ENCODE measurements at regions of chr9 and their contacts with region 1.

Region 1: DNA sequence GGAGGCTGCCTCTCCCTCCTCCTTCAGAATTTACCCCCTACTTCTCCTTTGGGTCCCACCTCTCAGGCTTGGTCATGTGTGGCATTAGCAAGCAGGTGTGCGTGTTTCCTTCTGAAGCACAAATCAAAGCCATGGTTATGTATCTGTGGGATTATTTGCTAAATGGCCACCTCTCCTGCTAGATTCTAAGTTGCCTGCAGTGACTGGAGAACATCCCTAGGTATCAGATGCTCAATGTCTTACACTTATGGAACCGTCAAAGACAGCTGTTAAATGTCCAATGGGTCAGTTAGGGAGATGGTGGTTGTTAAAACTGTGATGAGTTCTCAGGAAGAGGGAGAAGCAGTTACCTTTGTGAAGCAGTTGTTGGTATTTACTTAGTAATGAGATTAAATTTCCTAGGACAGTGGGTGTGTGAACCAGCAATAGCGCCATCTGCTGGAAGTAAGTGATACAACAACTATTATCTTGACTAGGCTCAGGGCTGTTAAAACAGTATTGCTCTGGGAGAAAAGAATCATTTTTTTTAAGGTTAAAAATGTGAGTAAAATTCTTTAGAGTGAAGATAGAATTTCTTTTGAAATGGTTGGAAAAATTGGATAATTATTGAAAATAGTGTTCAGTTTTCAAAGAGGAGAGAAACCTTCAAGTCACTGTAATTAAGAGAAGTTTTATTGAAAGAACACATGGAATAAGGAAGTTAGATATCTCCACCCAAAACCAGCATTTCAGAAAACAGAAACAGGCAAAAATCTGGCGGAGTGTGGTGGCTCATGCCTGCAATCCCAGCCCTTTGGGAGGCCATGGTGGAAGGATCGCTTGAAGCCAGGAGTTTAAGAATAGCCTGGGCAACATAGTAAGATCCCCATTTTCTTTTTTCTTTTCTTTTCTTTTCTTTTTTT is 71.3 kb downstream of the TMC1 start:
- DNase-seq: peak in 1 of 2 donors; percentile 23
- ATAC-seq: peak; percentile 89 to 95
- H3K4me3 ChIP-seq: no peak overlapping the region
- H3K27ac ChIP-seq: peak overlapping the region in 1 of 4 donors; percentile 29
- H3K4me1 ChIP-seq: peaks cover 6 to 7% of the 10 kb centered on the region in 2 donors
- H3K27me3 ChIP-seq: no peaks in the 10 kb centered on the region
- CTCF ChIP-seq: peak; percentile 81 to 92 (median 85)
- POLR2A ChIP-seq: no peak

Region 2: GRCh38 chr9:72038890-72039410 is 553.8 kb before region 1 on chr9:
- in situ Hi-C with region 1: loop called in 2 of 4 experiments (anchors 10 to 25 kb)
- intact Hi-C with region 1: no loop called
- DNase-seq: peak; percentile 40 to 61
- ATAC-seq: peak; percentile 72 to 91
- H3K4me3 ChIP-seq: no peak overlapping the region
- H3K27ac ChIP-seq: no peak overlapping the region
- H3K4me1 ChIP-seq: no peaks in the 10 kb centered on the region
- H3K27me3 ChIP-seq: no peaks in the 10 kb centered on the region
- CTCF ChIP-seq: peak; percentile 82 to 97 (median 91)
- POLR2A ChIP-seq: no peak

Region 3: DNA sequence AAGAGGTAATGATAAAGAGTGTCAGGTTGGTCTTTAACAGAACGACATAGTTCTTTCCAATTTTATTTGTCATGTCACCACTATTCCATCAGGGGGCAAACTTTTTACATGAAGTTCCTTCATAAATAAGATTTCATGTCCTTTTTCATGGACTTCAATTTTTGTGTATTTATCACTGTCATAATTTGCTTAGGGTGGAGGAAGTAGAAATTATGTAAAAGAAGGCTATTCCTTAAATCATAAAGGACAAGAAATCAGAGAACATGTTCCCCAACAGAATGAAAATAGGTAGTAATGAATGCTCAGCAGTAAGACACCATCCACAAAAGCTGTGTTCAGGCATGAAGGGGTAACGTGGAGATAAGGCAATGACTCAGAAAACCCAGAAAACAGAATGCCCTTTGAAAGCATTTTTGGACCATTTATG is 300.5 kb before region 1 on chr9:
- in situ Hi-C with region 1: loop called in 2 of 4 experiments (anchors 5 kb)
- intact Hi-C with region 1: no loop called
- DNase-seq: no peak
- ATAC-seq: peak; percentile 61
- H3K4me3 ChIP-seq: no peak overlapping the region
- H3K27ac ChIP-seq: peak overlapping the region in 1 of 4 donors; percentile 27
- H3K4me1 ChIP-seq: peaks cover 0 to 11% of the 10 kb centered on the region in 2 donors
- H3K27me3 ChIP-seq: no peaks in the 10 kb centered on the region
- CTCF ChIP-seq: peak; percentile 38 to 64 (median 45)
- POLR2A ChIP-seq: no peak

Region 4: DNA sequence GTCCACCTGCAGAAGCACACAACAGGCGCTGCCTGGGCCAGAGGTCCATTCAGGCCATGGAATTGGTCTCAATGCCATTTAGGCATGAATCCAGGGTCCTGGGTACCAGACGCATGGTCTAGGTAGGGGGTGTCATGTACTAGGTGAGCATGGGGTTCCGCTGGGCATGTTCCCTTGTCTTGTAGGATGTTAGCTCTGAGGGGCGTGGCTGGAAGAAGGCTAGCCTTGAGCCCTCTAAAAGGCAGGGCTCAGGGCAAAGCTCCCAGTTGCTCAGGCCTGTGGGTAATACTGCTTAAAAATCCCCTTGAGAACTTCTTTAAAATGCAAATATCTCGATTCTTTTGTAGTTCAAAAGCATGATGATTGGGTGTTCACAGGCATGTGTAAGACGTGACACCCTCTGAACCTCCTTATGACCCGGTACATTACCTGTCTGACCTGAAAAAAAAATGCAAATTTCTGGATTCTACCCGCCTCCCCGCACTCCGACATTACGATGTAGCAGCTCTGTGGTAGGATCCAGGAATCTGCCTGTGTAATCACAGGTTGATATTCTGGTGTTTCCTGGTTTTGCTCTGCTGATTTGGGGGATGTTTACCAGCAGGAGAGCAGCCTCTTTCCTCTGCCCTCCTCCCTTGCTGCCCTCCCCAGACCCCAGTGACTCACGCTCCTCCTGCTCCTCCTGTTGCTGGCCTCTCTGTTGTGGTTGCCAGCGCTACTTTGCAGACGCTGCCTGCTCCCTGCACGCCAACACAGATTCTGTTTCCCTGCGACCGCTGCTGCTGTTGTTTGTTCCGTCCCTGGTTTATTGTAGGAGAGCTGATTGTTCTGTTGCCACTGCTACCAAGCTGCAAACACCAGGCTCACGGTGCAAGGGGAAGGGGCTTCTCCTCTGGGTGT is 65.6 kb before region 1 on chr9:
- in situ Hi-C with region 1: loop called in 1 of 4 experiments (anchors 10 kb)
- intact Hi-C with region 1: loop called (anchors 5 kb)
- DNase-seq: peak; percentile 80 to 82
- ATAC-seq: peak; percentile 95
- H3K4me3 ChIP-seq: peak overlapping the region; percentile 13 to 48 (median 34)
- H3K27ac ChIP-seq: peak overlapping the region; percentile 63 to 80 (median 74)
- H3K4me1 ChIP-seq: peaks cover 16 to 21% of the 10 kb centered on the region in 2 donors
- H3K27me3 ChIP-seq: no peaks in the 10 kb centered on the region
- CTCF ChIP-seq: no peak
- POLR2A ChIP-seq: peak; percentile 21 to 73

Region 5: GRCh38 chr9:72827950-72828731 is 235.4 kb after region 1 on chr9:
- in situ Hi-C with region 1: no loop called
- intact Hi-C with region 1: loop called (anchors 5 kb)
- DNase-seq: no peak
- ATAC-seq: no peak
- H3K4me3 ChIP-seq: no peak overlapping the region
- H3K27ac ChIP-seq: peak overlapping the region in 3 of 4 donors; percentile 14 to 27 (median 27)
- H3K4me1 ChIP-seq: peaks cover 0 to 3% of the 10 kb centered on the region in 2 donors
- H3K27me3 ChIP-seq: no peaks in the 10 kb centered on the region
- CTCF ChIP-seq: no peak
- POLR2A ChIP-seq: no peak